Activated CD4-positive, alpha-beta memory T cell treated with anti-CD3 and anti-CD28 coated beads for 36 hours (primary cell): ENCODE measurements at regions of chr1 and their contacts with region 1.

Region 1: DNA sequence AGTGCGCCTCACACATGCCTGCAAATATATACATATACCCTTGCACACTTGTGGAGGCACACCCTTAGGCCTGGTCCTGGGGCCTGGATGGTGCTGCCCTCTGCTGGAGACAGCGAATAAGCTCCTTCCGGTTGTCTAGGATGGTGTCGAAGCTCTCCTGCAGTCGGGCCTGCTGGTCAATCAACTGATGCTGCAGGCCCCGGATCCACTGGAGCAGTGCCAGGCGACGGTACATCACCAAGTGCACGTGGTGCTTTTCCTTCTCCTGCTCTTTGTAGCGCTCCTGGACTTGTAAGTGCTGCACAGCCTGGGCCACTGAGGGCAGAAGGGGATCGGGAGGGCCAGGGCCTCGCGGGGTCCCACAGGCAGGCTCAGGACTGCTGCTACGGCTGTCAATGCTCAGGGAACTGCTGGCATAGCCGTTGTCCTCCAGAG is 3.1 kb downstream of the C1orf216 start:
- DNase-seq: peak; percentile 86
- H3K4me3 Mint-ChIP-seq: no peak overlapping the region
- H3K27ac Mint-ChIP-seq: no peak overlapping the region
- H3K4me1 Mint-ChIP-seq: peaks cover 32% of the 10 kb centered on the region
- H3K27me3 Mint-ChIP-seq: no peaks in the 10 kb centered on the region

Region 2: DNA sequence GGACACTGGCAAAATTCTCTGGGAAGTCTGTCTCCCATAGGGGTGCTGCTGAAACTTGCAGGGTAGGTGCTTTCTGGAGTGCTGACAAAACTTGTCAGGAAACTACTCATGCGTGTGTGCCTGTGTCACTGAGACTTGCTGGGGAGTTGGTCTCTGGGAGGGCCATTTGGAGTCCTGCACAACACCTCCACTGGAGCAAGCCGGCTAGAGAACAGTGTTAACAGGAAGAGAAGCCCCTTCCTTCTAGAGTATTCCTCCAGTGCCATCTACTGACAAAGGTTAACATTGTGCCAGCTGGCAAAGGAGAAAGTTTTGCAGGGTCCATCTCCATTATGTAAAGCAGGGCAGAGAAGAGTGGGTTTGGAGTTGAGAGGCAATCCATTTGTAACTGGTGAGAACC is 417.1 kb before region 1 on chr1:
- CTCF ChIA-PET with region 1: no interaction called
- POLR2A ChIA-PET with region 1: no interaction called
- intact Hi-C with region 1: no loop called
- DNase-seq: peak; percentile 19
- H3K4me3 Mint-ChIP-seq: no peak overlapping the region
- H3K27ac Mint-ChIP-seq: no peak overlapping the region
- H3K4me1 Mint-ChIP-seq: peaks cover 4% of the 10 kb centered on the region
- H3K27me3 Mint-ChIP-seq: no peaks in the 10 kb centered on the region

Region 3: GRCh38 chr1:35577071-35577998 is 138.2 kb before region 1 on chr1:
- CTCF ChIA-PET with region 1: interaction called, 25 read pairs
- POLR2A ChIA-PET with region 1: interaction called, 3 read pairs
- intact Hi-C with region 1: no loop called
- DNase-seq: peak; percentile 76
- H3K4me3 Mint-ChIP-seq: peak overlapping the region; percentile 72
- H3K27ac Mint-ChIP-seq: peak overlapping the region; percentile 58
- H3K4me1 Mint-ChIP-seq: peaks cover 22% of the 10 kb centered on the region
- H3K27me3 Mint-ChIP-seq: peaks cover 5% of the 10 kb centered on the region

Region 4: DNA sequence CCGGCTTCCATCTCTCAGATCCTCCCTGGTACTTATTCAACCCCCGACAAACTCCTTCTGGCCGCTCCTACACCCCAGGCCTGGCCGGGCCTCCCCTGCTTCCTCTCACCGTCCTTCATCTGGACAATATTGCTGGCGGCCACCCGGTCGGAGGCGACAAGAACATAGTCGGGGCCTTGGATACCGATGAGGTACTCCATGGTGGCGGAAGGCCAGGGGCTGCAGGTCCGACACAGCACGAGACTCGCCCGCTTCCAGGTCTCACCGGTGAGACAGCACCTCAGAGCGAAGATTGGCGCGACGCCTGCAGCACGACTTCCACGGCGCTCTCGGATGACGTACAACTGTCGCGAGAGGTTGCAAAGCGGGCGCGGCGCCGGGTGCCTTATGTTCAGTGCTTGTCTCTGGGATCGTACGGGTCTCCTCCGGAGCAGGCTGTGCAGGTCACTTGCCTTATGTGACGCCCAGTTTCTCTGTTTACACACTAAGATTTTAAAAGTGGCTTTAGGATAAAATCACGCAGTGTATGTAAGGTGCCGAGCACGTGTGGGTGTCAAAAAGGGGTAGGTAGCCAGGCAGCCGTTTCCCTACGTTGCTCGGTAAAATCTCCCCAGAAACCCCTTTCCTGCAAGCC is 74.2 kb before region 1 on chr1 and contains the start of gene PSMB2:
- CTCF ChIA-PET with region 1: interaction called, 9 read pairs
- POLR2A ChIA-PET with region 1: interaction called, 6 read pairs
- intact Hi-C with region 1: loop called (anchors 2 kb)
- DNase-seq: peak; percentile 98
- H3K4me3 Mint-ChIP-seq: peak within 1 kb of the TSS; percentile 100
- H3K27ac Mint-ChIP-seq: peak within 1 kb of the TSS; percentile 100
- H3K4me1 Mint-ChIP-seq: peaks cover 29% of the 10 kb centered on the region
- H3K27me3 Mint-ChIP-seq: peaks cover 14% of the 10 kb centered on the region
- total RNA-seq, gene PSMB2: 88.1 to 91.5 TPM

Region 5: DNA sequence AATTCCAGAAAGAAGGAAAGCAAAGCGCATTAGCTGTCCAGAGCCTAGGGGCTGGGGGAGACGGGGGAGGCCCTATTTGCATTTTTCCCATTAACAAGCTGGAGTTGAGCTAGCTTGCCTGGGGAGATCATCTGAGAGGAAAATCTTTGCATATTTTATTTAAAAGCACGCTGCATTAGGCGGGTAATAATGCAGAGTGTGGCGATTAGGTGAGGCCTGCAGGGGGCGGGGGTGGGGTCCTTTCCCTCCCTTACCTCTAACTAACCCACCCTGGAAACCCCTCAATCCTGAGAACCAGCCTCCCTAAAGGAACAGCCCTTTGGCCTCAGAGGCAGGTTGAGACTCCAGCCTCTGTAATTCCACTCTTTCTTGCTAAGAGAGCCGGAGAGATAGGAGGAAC is 13.1 kb before region 1 on chr1:
- CTCF ChIA-PET with region 1: interaction called, 30 read pairs
- POLR2A ChIA-PET with region 1: interaction called, 5 read pairs
- intact Hi-C with region 1: no loop called
- DNase-seq: no peak
- H3K4me3 Mint-ChIP-seq: no peak overlapping the region
- H3K27ac Mint-ChIP-seq: no peak overlapping the region
- H3K4me1 Mint-ChIP-seq: peaks cover 8% of the 10 kb centered on the region
- H3K27me3 Mint-ChIP-seq: peaks cover 39% of the 10 kb centered on the region

Region 6: GRCh38 chr1:35947547-35947946 is 232.0 kb after region 1 on chr1:
- CTCF ChIA-PET with region 1: no interaction called
- POLR2A ChIA-PET with region 1: no interaction called
- intact Hi-C with region 1: no loop called
- DNase-seq: no peak
- H3K4me3 Mint-ChIP-seq: no peak overlapping the region
- H3K27ac Mint-ChIP-seq: peak overlapping the region; percentile 43
- H3K4me1 Mint-ChIP-seq: peaks cover 34% of the 10 kb centered on the region
- H3K27me3 Mint-ChIP-seq: no peaks in the 10 kb centered on the region

Region 7: GRCh38 chr1:35988237-35988636 is 272.7 kb after region 1 on chr1:
- CTCF ChIA-PET with region 1: no interaction called
- POLR2A ChIA-PET with region 1: no interaction called
- intact Hi-C with region 1: no loop called
- DNase-seq: no peak
- H3K4me3 Mint-ChIP-seq: no peak overlapping the region
- H3K27ac Mint-ChIP-seq: no peak overlapping the region
- H3K4me1 Mint-ChIP-seq: no peaks in the 10 kb centered on the region
- H3K27me3 Mint-ChIP-seq: no peaks in the 10 kb centered on the region

Region 8: DNA sequence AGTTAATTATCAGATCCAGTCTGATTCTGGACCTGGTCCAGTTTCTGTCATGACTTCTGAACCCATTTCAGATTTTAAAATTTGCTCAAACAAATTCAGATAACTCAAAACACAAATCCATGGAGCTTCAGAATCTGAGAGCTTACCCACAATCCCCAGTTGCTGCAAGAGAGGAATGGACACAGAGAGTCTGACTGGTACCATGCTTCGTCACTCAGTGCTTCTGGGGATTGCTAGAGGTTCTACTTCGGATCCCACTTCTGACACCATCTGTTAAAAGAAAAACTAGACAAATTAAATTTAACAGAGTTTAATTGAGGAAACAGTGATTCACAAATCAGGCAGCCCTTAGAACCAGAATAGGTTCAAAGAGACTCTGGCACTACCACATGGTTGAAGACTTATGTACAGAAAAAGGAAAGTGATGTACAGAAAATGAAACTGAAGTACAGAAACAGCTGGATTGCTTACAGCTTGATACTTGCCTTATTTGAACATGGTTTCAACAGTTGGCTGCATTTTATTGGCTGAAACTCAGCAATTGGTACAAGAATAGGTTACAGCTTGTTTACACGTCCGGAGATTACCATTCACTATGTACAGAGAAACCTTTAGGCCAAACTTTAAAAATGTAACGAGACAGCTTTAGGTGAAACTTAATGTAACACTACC is 307.6 kb after region 1 on chr1:
- CTCF ChIA-PET with region 1: no interaction called
- POLR2A ChIA-PET with region 1: no interaction called
- intact Hi-C with region 1: no loop called
- DNase-seq: no peak
- H3K4me3 Mint-ChIP-seq: no peak overlapping the region
- H3K27ac Mint-ChIP-seq: peak overlapping the region; percentile 34
- H3K4me1 Mint-ChIP-seq: peaks cover 7% of the 10 kb centered on the region
- H3K27me3 Mint-ChIP-seq: no peaks in the 10 kb centered on the region